ENCODE measurements at regions of chr22 and their contacts with region 1.

Region 1: GRCh38 chr22:38114484-38115398 is 4.3 kb upstream of the BAIAP2L2 start:
- DNase-seq: peak; percentile 88 to 95 (median 95)
- ATAC-seq: peak; percentile 84 to 88
- H3K4me3 ChIP-seq: no peak overlapping the region
- H3K27ac ChIP-seq: no peak overlapping the region
- H3K4me1 ChIP-seq: no peaks in the 10 kb centered on the region
- H3K27me3 ChIP-seq: no peaks in the 10 kb centered on the region

Region 2: GRCh38 chr22:38051900-38052862 is 62.6 kb before region 1 on chr22:
- intact Hi-C with region 1: loop called in 1 of 4 experiments (anchors 5 kb)
- DNase-seq: peak; percentile 81 to 91 (median 89)
- ATAC-seq: peak; percentile 70 to 71
- H3K4me3 ChIP-seq: no peak overlapping the region
- H3K27ac ChIP-seq: no peak overlapping the region
- H3K4me1 ChIP-seq: peaks cover 5% of the 10 kb centered on the region
- H3K27me3 ChIP-seq: no peaks in the 10 kb centered on the region

Region 3: DNA sequence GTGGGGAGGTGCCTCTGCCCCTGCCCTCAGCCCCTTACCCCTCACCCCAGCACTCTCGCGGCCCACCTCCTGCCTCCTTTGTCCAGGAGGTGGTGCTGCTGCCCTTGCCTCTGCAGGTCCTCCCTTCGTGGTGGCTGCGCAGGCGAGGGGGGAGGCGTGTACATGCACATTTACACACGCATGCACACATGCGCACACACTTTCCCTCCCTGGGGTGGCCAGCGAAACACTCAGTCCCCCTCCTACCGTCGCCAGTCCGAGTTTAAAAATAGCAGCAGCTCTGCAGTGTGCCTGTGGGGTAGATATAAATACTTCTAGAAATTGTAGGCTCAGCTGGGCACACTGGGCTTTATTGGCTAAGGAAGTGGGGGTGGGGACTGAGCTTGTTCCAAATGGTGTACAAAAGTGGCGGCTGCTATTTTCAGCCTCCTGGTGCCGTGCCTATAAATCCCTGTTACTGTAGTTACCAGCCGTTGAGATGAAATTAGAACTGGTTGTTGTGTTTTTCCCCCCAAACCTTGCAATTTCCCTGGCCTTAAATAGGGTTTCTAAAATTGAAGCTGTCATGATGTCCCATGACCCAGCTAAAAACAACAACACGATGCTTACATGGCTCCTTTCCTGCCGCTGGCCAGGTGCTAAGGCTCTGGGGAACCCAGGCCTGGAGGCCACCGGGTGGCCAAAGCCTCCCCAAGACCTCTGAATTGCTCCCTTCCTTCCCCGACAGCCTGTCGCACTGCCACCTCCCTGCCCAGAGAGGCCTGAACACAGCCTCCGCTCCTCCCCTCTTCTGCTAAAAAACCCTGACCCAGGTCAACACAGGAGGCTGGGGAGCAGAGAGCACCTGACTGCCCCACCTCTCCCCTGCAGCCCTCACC is 45.1 kb before region 1 on chr22:
- intact Hi-C with region 1: no loop called
- DNase-seq: peak; percentile 73 to 93 (median 89)
- ATAC-seq: peak; percentile 63 to 80
- H3K4me3 ChIP-seq: no peak overlapping the region
- H3K27ac ChIP-seq: peak overlapping the region; percentile 88
- H3K4me1 ChIP-seq: peaks cover 10% of the 10 kb centered on the region
- H3K27me3 ChIP-seq: no peaks in the 10 kb centered on the region

Region 4: DNA sequence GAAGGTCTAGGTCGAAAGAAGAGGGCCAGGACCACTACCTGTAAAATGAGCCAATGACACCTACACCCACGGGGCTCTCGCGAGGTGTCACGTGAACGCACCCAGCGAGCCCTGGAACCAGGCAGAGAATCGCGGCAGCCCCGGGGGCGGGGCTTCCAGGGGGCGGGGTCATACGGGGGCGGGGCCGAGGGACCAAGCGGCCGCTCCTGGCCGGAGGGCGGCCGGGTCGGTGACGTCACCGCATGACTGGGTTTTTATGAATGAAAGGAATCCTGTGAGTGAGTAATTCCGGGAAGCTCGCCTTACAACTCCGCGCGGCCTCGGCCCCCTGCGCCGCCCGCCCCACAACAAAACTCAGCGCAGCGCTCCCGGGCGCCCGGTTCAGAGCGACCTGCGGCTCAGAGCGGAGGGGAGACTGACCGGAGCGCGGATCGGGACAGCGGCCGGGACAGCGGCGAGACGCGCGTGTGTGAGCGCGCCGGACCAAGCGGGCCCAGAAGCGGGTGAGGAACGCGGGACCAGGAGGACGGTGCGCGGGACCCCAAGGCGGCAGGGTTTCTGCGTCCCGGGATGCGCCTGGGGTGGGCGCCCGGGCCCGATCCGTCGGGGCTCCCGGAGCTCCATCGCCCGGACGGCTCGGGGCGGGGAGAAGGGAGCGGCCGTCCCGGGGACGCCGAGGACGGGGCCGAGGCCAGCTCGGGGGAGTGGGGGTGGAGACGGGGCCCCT is 87.1 kb after region 1 on chr22 and contains the start of gene MAFF:
- intact Hi-C with region 1: loop called in 1 of 4 experiments (anchors 10 kb)
- DNase-seq: peak; percentile 98 to 99 (median 98)
- ATAC-seq: peak; percentile 80 to 84
- H3K4me3 ChIP-seq: peak within 1 kb of the TSS; percentile 68
- H3K27ac ChIP-seq: peak within 1 kb of the TSS; percentile 99
- H3K4me1 ChIP-seq: peaks cover 15% of the 10 kb centered on the region
- H3K27me3 ChIP-seq: no peaks in the 10 kb centered on the region
- total RNA-seq, gene MAFF: 4.8 to 13.7 (median 7.1) TPM

Region 5: GRCh38 chr22:38230108-38230825 is 115.5 kb after region 1 on chr22:
- intact Hi-C with region 1: loop called in 1 of 4 experiments (anchors 10 kb)
- DNase-seq: peak in 1 of 3 donors; percentile 87
- ATAC-seq: peak in 1 of 2 donors; percentile 28
- H3K4me3 ChIP-seq: no peak overlapping the region
- H3K27ac ChIP-seq: no peak overlapping the region
- H3K4me1 ChIP-seq: peaks cover 3% of the 10 kb centered on the region
- H3K27me3 ChIP-seq: no peaks in the 10 kb centered on the region

Region 6: DNA sequence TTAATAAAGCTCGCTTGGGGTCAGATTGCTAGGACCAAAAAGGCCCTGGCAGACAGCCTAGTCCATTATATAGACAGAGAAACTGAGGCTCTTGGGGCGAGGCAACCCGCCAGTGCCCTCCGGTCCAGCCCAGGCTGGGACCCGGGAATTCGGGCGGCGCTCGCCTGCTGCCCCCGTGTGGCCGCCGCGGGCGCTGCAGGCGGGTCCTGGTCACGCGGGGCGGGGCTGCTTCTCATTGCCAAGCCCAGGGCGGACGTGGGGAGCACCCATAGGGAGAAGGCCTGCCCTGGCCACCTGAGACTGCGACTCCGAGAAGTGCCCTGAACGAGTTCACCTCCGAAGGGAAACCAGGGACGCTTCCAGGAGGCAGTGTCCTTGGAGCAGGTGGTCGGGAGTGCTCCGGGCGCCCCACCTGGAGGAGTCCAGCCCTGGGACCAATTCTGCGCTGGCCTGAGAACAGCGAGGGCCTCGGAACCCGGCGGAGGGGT is 238.4 kb after region 1 on chr22:
- intact Hi-C with region 1: loop called in 2 of 4 experiments (anchors 10 kb)
- DNase-seq: peak; percentile 69 to 90 (median 90)
- ATAC-seq: peak; percentile 80 to 86
- H3K4me3 ChIP-seq: no peak overlapping the region
- H3K27ac ChIP-seq: no peak overlapping the region
- H3K4me1 ChIP-seq: no peaks in the 10 kb centered on the region
- H3K27me3 ChIP-seq: no peaks in the 10 kb centered on the region

Measured in right cardiac atrium (tissue), 5 donors.